ENCODE measurements at regions of chr20 and their contacts with region 1.

Region 1: GRCh38 chr20:8589956-8590355 is 457.9 kb downstream of the PLCB1 start:
- DNase-seq: peak; percentile 86
- H3K4me3 ChIP-seq: no peak overlapping the region
- H3K27ac ChIP-seq: peak overlapping the region; percentile 94
- H3K4me1 ChIP-seq: peaks cover 36% of the 10 kb centered on the region
- H3K27me3 ChIP-seq: no peaks in the 10 kb centered on the region
- CTCF ChIP-seq: no peak
- POLR2A ChIP-seq: no peak

Region 2: DNA sequence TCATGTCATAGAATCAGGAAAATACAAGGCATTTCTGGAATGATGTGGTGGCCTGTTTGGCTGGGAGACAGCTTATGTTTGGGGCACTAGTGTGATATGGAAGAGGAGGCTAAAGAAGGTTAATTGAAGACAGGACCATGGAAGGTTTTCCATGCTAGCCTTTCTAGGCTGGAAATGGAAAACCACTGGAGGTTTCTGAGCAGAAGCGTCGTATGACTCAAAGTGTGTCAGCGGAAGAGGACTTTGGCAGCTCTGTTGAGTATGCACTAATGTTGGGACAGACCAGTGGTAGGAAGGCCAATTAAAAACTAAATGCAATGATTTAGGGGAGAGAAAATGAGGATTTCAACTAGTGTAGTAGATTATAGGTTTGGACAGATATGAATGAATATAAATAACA is 44.7 kb before region 1 on chr20:
- CTCF ChIA-PET with region 1: interaction called, 3 read pairs
- POLR2A ChIA-PET with region 1: no interaction called
- dilution Hi-C with region 1: no loop called
- intact Hi-C with region 1: loop called (anchors 5 kb)
- DNase-seq: no peak
- H3K4me3 ChIP-seq: no peak overlapping the region
- H3K27ac ChIP-seq: no peak overlapping the region
- H3K4me1 ChIP-seq: peaks cover 29% of the 10 kb centered on the region
- H3K27me3 ChIP-seq: no peaks in the 10 kb centered on the region
- CTCF ChIP-seq: no peak
- POLR2A ChIP-seq: no peak

Region 3: DNA sequence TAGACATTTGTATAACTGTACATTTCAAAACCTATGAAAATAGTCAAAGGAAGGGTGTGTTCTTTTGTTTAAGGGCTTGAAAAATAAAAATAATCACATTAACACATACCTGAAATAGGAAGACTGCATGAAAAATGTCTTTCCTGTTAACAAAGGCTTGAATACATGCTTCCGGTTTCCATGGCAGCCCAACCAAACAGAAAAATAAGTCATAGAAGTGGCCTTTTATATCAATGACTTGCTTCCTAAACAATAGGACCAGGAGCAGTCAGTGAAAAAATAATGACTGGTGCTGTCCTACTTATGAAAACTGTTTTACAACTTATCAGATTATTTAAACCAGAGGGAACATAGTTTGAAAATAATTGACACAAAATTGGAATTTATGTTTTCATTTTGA is 66.4 kb after region 1 on chr20:
- CTCF ChIA-PET with region 1: no interaction called
- POLR2A ChIA-PET with region 1: no interaction called
- dilution Hi-C with region 1: no loop called
- intact Hi-C with region 1: loop called (anchors 1 kb)
- DNase-seq: peak; percentile 95
- H3K4me3 ChIP-seq: no peak overlapping the region
- H3K27ac ChIP-seq: peak overlapping the region; percentile 65
- H3K4me1 ChIP-seq: peaks cover 32% of the 10 kb centered on the region
- H3K27me3 ChIP-seq: no peaks in the 10 kb centered on the region
- CTCF ChIP-seq: no peak
- POLR2A ChIP-seq: no peak